ENCODE measurements at regions of chr10 and their contacts with region 1.

Region 1: DNA sequence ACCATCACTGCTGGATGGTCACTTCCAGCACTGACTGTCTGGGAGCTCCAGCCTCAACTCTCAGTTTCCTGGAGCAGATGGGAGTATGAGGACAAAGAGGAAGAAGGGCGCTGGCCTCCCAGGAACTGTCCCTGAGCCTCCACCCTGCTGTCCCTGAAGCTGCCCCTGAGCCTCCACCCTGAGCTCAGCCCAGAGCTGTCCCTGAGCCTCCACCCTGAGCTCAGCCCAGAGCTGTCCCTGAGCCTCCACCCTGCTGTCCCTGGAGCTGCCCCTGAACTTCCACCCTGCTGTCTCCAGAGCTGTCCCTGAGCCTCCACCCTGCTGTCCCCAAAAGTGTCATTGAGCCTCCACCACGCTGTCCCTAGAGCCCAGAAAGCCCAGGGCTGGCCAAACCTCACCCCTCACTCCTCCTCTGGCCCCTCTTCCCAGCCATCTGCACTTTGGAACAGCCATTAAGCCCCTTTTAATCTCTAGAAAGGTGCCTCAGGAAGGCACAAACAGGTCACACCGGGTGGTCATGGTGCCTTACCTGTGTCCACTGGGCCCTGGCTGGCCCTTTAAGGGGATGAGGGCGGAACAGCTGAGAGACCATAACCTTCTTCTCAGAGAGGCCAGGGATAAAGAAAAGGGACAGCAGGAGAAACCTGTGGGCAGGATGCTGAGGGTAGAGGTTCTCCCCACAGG is 30.6 kb upstream of the TUBB8 start:
- DNase-seq: no peak
- H3K4me3 ChIP-seq: no peak overlapping the region
- H3K27ac ChIP-seq: no peak overlapping the region
- H3K4me1 ChIP-seq: peaks cover 0 to 2% of the 10 kb centered on the region in 2 experiments; a peak in 1 of 4 replicates
- H3K27me3 ChIP-seq: no peaks in the 10 kb centered on the region
- CTCF ChIP-seq: no peak
- EP300 ChIP-seq: no peak
- RAD21 ChIP-seq: no peak

Region 2: DNA sequence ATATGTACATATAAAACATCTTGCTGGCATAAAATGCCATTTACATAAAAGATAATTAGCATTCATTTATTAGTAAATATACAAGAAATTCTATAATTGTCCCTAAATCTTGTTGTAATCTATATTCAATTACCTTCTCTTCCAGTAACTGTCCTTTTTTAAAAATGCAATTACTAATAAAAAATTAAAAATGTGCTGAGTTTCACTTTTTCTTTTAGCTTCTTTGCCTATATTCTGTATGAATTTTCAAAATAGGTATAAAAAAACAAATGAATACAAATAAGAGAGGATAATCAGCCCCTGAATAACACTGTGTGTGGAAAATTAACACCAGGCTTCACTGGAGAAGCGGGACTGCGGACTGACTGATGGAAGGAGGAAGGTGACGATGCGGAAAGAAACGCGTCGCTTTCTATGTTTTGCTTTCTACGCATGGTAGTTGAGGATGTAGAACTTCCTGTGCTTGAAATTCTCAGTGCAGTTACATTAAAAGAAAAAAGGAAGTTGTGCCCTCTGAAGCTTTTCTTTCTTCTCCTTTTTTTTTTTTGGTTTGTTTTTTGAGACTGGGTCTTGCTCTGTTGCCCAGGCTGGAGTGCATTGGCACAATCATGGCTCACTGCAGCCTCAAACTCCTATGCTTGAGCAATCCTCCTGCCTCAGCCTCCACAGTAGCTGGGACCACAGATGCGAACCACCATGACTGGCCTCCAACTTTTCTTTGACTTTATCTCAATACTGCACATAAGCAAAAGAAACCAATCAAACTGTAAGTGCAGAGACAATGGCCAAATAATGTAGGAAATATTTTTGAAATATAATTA is 48.1 kb after region 1 on chr10:
- CTCF ChIA-PET with region 1: interaction called, 10 read pairs
- POLR2A ChIA-PET with region 1: no interaction called
- DNase-seq: no peak
- H3K4me3 ChIP-seq: no peak overlapping the region
- H3K27ac ChIP-seq: no peak overlapping the region
- H3K4me1 ChIP-seq: peaks cover 4 to 7% of the 10 kb centered on the region in 2 experiments; a peak in 3 of 4 replicates
- H3K27me3 ChIP-seq: no peaks in the 10 kb centered on the region
- CTCF ChIP-seq: no peak
- EP300 ChIP-seq: no peak
- RAD21 ChIP-seq: no peak

Region 3: DNA sequence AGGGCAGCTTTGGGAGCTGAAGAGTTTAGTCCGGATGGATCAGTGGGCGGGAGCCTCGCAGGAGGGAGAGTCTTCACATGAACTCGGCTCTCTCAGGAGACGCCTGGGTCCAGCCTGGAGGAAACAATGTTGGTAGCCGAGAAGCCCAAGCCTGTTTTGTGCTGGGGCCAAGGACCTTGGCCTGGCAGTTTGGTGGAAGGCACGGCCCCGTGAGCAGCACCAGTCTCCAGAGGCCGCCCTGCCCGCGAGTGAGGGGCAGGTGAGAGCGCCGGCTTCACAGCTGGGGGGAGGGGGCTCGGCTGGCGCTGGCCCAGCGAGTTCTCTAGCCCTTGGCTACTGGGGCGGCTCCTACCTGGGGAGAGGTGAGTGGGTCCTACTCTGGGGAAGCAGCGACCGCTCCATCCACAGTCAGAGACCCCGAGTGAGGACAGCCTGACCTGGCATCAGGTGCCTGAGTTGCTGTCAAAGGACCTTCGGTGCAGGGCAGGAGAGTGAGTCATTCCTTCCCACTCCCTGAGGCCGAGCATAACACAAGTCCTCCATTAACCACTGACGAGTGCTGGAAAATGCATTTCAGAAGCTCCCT is 699.0 kb after region 1 on chr10:
- CTCF ChIA-PET with region 1: no interaction called
- POLR2A ChIA-PET with region 1: no interaction called
- DNase-seq: peak; percentile 19
- H3K4me3 ChIP-seq: no peak overlapping the region
- H3K27ac ChIP-seq: no peak overlapping the region
- H3K4me1 ChIP-seq: peaks cover 4 to 5% of the 10 kb centered on the region in 2 experiments; a peak in 2 of 4 replicates
- H3K27me3 ChIP-seq: no peaks in the 10 kb centered on the region
- CTCF ChIP-seq: no peak
- EP300 ChIP-seq: no peak
- RAD21 ChIP-seq: no peak

Measured in SK-N-SH (cell line).